ENCODE measurements at regions of chr1 and their contacts with region 1.

Region 1: DNA sequence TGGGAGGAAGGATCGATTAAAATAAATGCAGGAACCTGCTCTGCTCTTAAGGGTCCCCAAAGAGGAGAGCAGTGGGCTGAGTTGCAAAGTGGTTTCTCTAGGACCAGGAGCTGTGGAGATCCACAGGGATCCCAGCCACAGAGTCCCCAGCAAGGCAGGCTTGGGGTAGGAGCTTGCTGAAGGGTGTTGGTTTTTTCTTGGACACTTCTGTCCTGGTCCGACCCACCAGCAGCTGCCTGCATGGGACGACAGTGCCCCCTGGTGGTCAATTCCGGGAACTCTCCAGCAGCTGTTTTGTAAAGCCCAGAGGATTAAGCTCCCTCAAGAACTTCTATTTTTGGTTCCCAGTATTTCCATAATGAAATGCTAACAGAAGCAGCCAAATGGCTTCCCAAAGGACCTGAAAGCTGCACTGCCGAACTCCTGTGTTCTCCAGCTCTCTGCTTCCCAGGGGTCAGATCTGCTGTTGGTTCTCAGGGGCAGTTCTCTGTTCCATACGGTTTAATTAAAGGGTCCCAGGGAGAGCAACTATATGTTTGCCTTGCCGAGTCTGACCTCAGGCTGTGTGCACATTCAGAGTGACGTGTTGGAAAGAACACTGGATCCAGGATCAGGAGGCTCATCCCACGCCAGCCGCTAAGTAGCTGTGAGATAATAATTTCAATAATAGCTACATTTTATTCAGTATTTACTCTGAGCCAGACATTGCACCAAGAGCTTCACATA is 23.2 kb downstream of the NENF start:
- DNase-seq: peak; percentile 80 to 93
- H3K4me3 ChIP-seq: no peak overlapping the region
- H3K4me1 ChIP-seq: no peaks in the 10 kb centered on the region
- H3K27me3 ChIP-seq: no peaks in the 10 kb centered on the region

Region 2: GRCh38 chr1:212062832-212063438 is 393.0 kb before region 1 on chr1:
- in situ Hi-C with region 1: loop called (anchors 10 kb)
- DNase-seq: peak in 1 of 2 experiments; percentile 53
- H3K4me3 ChIP-seq: no peak overlapping the region
- H3K4me1 ChIP-seq: no peaks in the 10 kb centered on the region
- H3K27me3 ChIP-seq: no peaks in the 10 kb centered on the region